Dorsolateral prefrontal cortex (tissue), 120 donors: ENCODE measurements at regions of chr2 and their contacts with region 1.

Region 1: GRCh38 chr2:20446917-20447436 is at the start of gene RHOB:
- DNase-seq: peak; percentile 96 to 99 (median 99)
- H3K4me3 ChIP-seq: peak within 1 kb of the TSS; percentile 75 to 100 (median 96)
- H3K27ac ChIP-seq: peak within 1 kb of the TSS; percentile 88 to 100 (median 99)
- H3K27me3 ChIP-seq: no peaks in the 10 kb centered on the region
- CTCF ChIP-seq: peak in 19 of 56 donors; percentile 3 to 50 (median 24)
- total RNA-seq, gene RHOB: 206 to 544 (median 321) TPM

Region 2: GRCh38 chr2:20378792-20379519 is 68.0 kb before region 1 on chr2:
- intact Hi-C with region 1: loop called (anchors 5 kb)
- DNase-seq: peak; percentile 70 to 87 (median 80)
- H3K4me3 ChIP-seq: no peak overlapping the region
- H3K27ac ChIP-seq: peak overlapping the region in 32 of 59 donors; percentile 1 to 85 (median 54)
- H3K27me3 ChIP-seq: no peaks in the 10 kb centered on the region
- CTCF ChIP-seq: peak; percentile 31 to 93 (median 78)

Region 3: GRCh38 chr2:20578895-20579825 is 132.2 kb after region 1 on chr2:
- intact Hi-C with region 1: loop called (anchors 2 to 5 kb)
- DNase-seq: peak; percentile 53 to 87 (median 78)
- H3K4me3 ChIP-seq: peak overlapping the region in 8 of 59 donors; percentile 9 to 32 (median 20)
- H3K27ac ChIP-seq: peak overlapping the region; percentile 1 to 90 (median 76)
- H3K27me3 ChIP-seq: no peaks in the 10 kb centered on the region
- CTCF ChIP-seq: peak in 4 of 56 donors; percentile 9 to 29 (median 12)

Region 4: GRCh38 chr2:20600756-20601325 is 153.9 kb after region 1 on chr2:
- intact Hi-C with region 1: loop called in 1 of 2 experiments (anchors 1 kb)
- DNase-seq: no peak
- H3K4me3 ChIP-seq: peak overlapping the region in 6 of 59 donors; percentile 6 to 32 (median 18)
- H3K27ac ChIP-seq: peak overlapping the region in 58 of 59 donors; percentile 64 to 98 (median 93)
- H3K27me3 ChIP-seq: no peaks in the 10 kb centered on the region
- CTCF ChIP-seq: peak; percentile 24 to 77 (median 54)

Region 5: DNA sequence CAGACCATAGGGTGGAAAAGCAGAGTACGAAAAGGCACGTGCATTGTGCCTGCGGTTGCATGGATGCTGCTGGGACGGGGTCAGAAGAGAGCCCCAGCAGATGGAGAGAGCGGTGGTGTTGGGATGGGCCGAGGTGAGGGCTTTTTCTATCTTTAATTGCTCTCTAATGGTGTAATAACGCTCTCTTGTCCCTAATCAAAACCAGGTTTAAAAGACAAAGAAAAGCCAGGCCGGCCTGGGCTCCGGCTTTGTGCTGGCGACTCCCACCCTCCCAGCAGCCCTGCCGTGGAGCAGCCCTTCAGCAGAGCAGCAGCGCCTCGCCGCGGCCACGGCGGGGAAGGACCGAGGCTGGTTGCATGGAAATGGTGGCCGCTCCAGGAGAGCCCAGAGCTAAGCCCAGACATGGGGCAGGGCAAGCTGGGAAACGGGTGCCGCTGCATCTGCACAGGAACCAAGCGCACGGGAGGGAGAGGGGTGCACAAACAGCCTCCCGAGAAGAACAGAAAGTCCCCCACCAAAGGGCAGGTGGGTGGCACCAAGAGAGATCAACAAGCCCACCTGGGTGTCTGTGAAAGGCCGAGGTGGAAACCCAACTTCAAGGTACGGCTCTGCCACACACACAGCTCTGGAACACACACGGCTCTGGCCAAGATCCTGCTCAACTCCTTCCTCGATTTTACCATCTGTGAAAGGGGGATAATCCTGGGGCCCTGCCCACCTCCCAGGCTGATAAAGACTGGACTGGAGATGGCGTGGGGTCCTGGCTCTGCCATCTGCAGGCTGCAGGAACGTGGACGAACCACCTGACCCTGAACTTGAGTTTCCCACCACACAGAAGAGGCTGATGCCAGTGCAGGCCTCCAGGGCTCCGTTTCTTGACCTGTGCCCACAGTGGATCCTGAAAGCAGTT is 189.0 kb after region 1 on chr2:
- intact Hi-C with region 1: loop called (anchors 1 to 2 kb)
- DNase-seq: peak; percentile 83 to 92 (median 89)
- H3K4me3 ChIP-seq: peak overlapping the region in 25 of 59 donors; percentile 2 to 45 (median 24)
- H3K27ac ChIP-seq: peak overlapping the region in 57 of 59 donors; percentile 1 to 85 (median 73)
- H3K27me3 ChIP-seq: no peaks in the 10 kb centered on the region
- CTCF ChIP-seq: peak; percentile 62 to 99 (median 94)